Left ventricle myocardium superior (tissue), 1 donor: ENCODE measurements at regions of chr22 and their contacts with region 1.

Region 1: GRCh38 chr22:21791635-21792625 is 56.3 kb upstream of the YPEL1 start:
- DNase-seq: no peak
- ATAC-seq: no peak

Region 2: DNA sequence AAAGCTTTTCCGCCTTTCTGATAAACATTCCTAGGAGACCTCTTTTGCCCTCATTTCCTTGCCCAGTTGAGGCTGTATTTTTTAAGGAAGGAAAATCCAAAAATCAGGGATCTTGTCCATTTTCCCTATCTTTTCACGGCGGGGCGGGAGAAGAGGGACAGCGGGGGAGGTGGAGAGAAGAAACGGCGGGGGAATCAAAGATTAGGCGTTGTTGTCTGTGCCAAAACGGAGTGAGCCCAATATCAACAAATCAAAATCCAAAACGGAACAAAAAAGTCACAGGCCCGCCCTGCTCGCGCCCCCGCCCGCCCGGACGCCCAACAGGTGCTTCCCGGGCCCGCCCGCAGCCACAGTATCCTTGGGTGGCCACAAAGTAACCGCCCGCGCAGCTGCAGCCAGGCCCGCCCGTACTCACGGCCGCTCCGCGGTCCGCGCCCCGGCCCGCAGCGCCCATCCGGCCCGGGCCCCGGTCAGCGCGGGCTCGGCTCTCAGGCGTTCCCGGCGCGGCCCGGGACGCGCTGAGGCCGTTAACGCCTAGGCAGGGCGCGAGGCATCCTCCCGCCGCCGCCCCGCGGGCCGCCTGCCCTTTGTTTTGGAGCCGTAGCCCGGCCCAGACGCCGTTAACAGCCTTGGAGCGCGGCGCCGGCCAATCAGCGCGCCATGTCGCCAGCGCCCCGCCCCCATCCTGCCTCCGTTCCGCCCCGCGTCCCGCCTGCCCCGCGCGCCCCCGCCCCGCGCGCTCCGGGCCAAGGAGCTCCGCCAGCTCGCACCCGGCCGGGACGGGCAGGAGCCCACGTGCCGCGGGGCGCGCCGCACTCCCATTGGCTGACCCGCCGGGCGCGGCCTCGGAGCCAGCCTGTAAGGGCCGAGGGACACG is 56.5 kb before region 1 on chr22 and contains the start of gene YPEL1:
- intact Hi-C with region 1: no loop called
- DNase-seq: peak; percentile 99
- ATAC-seq: peak; percentile 99
- total RNA-seq, gene YPEL1: 3.2 TPM

Region 3: GRCh38 chr22:21857481-21857914 is 65.6 kb after region 1 on chr22:
- intact Hi-C with region 1: loop called (anchors 10 kb)
- DNase-seq: no peak
- ATAC-seq: no peak